ENCODE measurements at regions of chr5 and their contacts with region 1.

Region 1: DNA sequence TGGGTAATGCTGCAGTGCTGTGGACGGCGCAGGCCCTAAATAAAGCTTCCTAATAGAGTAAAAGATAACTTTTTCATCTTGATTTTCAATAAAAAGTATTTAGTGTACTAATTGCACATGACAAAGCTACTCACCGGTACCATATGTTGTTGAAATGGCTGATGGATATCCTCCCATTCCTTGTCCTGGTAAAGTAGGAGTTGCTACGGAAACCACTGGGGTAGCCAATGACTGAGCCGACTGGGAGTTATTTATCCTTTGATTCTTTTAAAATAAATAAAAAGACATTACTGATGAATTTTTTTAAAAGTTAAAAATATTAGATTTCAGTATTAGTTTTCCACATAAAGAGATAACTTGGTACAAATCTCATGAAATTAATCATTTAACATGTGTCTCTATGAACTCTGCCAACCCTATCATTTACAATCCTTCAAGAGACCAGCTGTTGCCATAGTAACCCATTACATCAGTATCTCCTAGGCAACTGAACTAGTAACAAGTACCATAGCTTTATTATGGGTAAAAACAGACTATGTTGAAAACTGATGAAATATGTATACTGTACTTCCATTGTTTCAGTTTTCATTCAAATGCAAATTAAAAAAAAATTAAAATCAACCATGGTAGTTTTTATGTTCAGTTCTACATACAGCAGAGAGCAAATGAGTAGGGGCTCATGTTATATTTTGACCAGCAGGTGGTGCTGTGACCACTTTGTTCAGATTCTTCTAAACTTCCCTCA is 153.7 kb downstream of the MEF2C start:
- DNase-seq: peak in 7 of 10 donors; percentile 48 to 86 (median 62)
- H3K4me3 ChIP-seq: peak overlapping the region in 18 of 59 donors; percentile 3 to 37 (median 12)
- H3K27ac ChIP-seq: peak overlapping the region in 37 of 59 donors; percentile 2 to 92 (median 36)
- H3K27me3 ChIP-seq: no peaks in the 10 kb centered on the region
- CTCF ChIP-seq: peak; percentile 82 to 98 (median 92)

Region 2: GRCh38 chr5:88527866-88528265 is 201.4 kb before region 1 on chr5:
- intact Hi-C with region 1: no loop called
- DNase-seq: no peak
- H3K4me3 ChIP-seq: no peak overlapping the region
- H3K27ac ChIP-seq: no peak overlapping the region
- H3K27me3 ChIP-seq: no peaks in the 10 kb centered on the region
- CTCF ChIP-seq: no peak

Region 3: DNA sequence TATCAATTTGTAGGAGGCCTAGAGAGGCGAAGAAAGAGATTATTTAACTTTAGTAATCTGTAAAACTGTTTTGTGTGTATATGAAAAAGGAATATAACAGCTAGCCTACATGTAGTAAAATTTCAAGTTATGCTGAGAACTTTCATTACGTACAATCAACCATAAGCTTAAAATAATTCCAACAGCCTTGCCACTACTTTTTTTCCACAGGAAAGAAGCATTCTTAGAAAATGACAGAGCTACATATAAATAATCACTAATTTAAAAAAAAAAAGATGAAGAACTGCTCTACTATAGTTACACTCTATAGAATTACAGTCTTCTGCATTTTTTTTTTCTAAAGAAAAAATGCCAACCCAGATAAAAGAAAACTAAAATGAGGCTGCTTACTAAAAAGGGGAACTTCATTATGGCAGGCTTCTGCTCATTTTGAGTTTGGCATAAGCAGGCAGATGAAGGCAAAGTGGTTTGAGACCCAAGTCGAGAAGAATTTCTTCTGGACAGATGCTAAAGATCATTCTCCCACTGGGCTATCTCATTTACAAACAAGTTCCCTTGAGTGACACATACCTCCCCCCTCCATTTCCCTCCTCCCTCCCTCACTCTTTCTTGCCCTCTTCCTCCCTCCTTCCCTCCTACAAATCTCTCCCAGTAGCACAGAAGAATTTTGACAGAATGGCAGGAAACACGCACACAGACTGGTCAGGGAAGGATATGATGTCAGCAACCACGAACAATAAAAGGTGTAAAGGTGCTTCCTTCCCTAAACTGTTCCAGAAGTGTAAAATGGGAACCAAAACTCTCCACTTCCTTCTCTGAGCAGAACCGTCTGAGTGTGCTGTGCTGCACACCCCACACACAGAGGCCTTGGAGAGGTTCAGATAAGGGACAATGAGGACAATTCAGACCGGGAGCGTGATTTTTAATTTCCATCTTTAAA is 97.7 kb after region 1 on chr5:
- intact Hi-C with region 1: loop called in 1 of 2 experiments (anchors 10 kb)
- DNase-seq: no peak
- H3K4me3 ChIP-seq: peak overlapping the region in 39 of 59 donors; percentile 0 to 54 (median 27)
- H3K27ac ChIP-seq: peak overlapping the region in 58 of 59 donors; percentile 13 to 94 (median 77)
- H3K27me3 ChIP-seq: no peaks in the 10 kb centered on the region
- CTCF ChIP-seq: no peak

Region 4: GRCh38 chr5:88883059-88883835 is 154.0 kb after region 1 on chr5 and contains the start of gene MEF2C:
- intact Hi-C with region 1: loop called (anchors 5 kb)
- DNase-seq: peak in 9 of 10 donors; percentile 43 to 77 (median 68)
- H3K4me3 ChIP-seq: peak within 1 kb of the TSS; percentile 50 to 89 (median 78)
- H3K27ac ChIP-seq: peak within 1 kb of the TSS; percentile 70 to 99 (median 96)
- H3K27me3 ChIP-seq: no peaks in the 10 kb centered on the region
- CTCF ChIP-seq: no peak
- total RNA-seq, gene MEF2C: 147 to 673 (median 441) TPM

Region 5: GRCh38 chr5:88889189-88890069 is 160.2 kb after region 1 on chr5:
- intact Hi-C with region 1: loop called (anchors 5 kb)
- DNase-seq: peak; percentile 23 to 77 (median 66)
- H3K4me3 ChIP-seq: peak overlapping the region; percentile 40 to 88 (median 67)
- H3K27ac ChIP-seq: peak overlapping the region in 58 of 59 donors; percentile 31 to 99 (median 96)
- H3K27me3 ChIP-seq: no peaks in the 10 kb centered on the region
- CTCF ChIP-seq: peak in 1 of 56 donors; percentile 9

Region 6: DNA sequence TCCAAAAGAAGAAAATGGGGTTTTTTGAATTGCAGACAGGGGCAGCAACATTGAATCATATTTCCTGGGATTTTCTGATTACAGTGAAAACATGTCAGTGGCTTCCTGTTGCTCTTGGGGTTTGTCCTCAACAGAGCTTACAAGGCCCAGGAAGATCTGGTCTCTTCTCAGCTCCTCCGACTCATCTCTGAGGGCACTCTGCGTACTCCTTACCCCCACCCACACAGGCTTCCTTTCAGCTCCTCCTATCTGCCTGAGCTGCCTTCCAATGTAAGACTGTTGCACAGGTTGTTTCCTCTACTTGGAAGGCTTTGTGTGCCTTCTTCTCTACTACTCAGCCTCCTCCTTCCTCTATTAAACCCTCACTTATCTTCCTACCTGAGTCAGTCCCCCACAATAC is 398.8 kb after region 1 on chr5:
- intact Hi-C with region 1: no loop called
- DNase-seq: no peak
- H3K4me3 ChIP-seq: no peak overlapping the region
- H3K27ac ChIP-seq: no peak overlapping the region
- H3K27me3 ChIP-seq: no peaks in the 10 kb centered on the region
- CTCF ChIP-seq: no peak

Region 7: GRCh38 chr5:90264689-90265544 is 1535.7 kb after region 1 on chr5:
- intact Hi-C with region 1: loop called in 1 of 2 experiments (anchors 5 kb)
- DNase-seq: peak; percentile 43 to 84 (median 66)
- H3K4me3 ChIP-seq: peak overlapping the region in 29 of 59 donors; percentile 1 to 50 (median 21)
- H3K27ac ChIP-seq: peak overlapping the region in 34 of 59 donors; percentile 0 to 76 (median 23)
- H3K27me3 ChIP-seq: no peaks in the 10 kb centered on the region
- CTCF ChIP-seq: peak; percentile 77 to 98 (median 92)

Region 8: DNA sequence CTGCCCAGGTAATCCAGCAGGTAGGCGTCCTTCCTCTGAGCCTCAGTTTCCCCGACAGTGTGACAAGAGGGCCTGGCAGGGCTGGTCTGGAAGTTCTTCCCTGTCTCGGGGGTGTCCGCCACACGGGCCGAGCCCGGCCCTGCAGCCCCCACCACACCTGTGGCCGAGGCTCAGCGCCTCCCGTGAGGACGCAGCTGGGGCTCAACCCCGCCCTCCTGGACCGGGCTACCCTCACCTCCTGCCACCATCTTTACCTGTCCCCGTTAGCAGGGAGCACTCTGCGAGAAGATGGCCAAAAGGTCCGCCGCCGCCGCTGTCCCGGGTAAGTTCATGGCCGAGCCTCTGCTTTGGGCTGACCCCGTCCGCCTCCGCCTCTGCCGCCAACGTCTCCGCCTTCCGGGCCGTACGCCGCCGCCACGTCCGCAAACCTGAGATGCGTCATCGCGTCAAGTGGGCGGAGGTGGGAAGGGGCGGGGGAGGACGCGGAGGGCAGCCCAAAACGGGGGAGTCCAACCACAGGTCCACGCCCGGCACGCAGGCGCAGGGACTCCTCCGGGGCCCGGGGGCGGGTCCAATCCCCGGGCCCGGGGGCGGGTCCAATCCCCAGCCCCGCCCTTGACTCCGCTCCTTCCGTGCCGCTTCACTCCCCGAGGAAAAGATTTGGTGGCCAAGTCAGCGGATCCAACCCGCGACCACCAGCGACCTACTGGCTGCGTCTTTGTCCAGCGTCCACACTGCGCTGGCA is 1800.1 kb after region 1 on chr5 and contains the start of gene LYSMD3:
- intact Hi-C with region 1: loop called in 1 of 2 experiments (anchors 10 kb)
- DNase-seq: peak; percentile 90 to 99 (median 94)
- H3K4me3 ChIP-seq: peak within 1 kb of the TSS; percentile 63 to 99 (median 90)
- H3K27ac ChIP-seq: peak within 1 kb of the TSS; percentile 74 to 100 (median 97)
- H3K27me3 ChIP-seq: no peaks in the 10 kb centered on the region
- CTCF ChIP-seq: peak in 1 of 56 donors; percentile 7
- total RNA-seq, gene LYSMD3: 8.2 to 18.0 (median 13.0) TPM